ENCODE measurements at regions of chr11 and their contacts with region 1.

Region 1: GRCh38 chr11:5380740-5381342 is 2.8 kb upstream of the OR51M1 start:
- DNase-seq: peak; percentile 46
- CTCF ChIP-seq: peak; percentile 56

Region 2: DNA sequence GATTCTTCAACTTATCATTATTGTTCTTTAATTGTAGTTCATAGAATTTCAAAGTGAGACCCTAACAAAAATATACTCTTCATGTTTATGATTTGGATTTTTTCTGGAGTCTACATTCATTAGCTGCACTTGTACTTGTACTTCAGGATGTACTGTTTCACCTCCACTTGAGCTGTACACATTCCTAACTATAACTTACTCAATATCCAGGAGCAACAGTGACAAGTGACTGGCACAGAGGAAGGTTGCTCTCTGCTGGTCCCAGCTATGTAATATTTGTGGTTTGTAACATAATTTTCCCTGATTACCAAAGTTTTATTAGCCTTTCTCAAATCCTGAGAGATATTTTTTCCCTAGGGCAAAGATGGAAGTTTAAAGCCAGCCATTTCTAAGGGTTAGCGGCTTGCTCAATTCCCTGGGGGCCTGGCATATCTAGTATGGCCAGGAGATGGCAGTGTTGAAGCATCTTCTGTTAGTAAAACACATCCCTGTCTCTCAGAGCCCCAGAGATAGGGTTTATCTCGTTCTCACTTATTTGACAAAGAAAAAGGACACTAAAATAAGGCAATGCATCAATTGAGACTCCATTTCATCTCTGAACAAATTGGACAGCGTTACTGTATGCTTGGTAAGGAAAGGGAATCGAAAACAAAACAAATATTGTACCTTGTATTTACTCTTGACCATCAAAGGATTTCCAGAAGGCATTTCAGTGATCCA is 256.9 kb before region 1 on chr11:
- CTCF ChIA-PET with region 1: interaction called, 12 read pairs
- POLR2A ChIA-PET with region 1: no interaction called
- DNase-seq: peak; percentile 22
- CTCF ChIP-seq: peak; percentile 81

Region 3: DNA sequence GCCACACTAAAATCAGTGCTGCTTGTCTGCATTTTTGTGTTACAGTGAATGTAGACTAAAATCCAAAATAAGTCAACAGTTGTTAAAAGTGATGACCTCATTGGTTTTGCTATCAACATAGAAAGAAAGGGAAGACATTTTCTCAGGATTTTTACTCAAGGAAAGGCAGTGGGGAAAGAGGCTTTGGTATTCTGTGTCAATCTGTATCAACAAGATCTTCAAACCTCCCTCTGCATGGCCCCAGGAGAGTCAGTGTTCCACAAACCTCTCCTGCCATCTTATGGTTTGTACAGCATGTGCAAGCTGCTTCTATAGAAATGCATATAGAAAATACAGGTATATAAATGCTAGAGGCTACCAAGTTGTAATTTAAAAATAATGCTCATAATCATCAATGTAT is 11.0 kb before region 1 on chr11:
- CTCF ChIA-PET with region 1: interaction called, 25 read pairs
- POLR2A ChIA-PET with region 1: no interaction called
- DNase-seq: peak; percentile 17
- CTCF ChIP-seq: peak; percentile 32

Measured in GM10248 (cell line).